MCF 10A (cell line): ENCODE measurements at regions of chr19 and their contacts with region 1.

Region 1: DNA sequence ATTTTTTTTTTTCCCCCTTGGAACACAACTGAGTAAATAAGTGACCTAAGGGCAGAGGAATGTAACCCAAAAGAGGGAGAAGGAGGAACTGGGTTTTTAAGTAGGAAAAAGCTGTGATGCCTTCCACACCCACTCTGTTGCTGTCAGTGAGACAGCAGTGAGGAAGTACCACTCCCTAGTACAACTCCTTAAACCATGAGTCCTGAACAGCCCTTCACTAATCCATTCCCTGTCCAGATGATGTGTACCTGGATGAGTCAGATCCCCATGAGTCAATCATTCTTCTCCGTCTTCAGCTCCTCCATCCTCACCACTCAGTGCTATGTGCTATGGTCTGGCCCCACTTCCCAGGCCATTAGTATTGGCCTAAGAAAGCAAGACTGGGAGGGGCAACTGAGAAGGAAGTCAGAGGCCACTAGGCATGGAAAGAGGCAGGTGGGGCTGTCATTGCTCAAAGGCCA is 12.9 kb upstream of the CXCL17 start:
- DNase-seq: peak; percentile 77
- H3K4me3 Mint-ChIP-seq: no peak overlapping the region
- H3K27ac Mint-ChIP-seq: no peak overlapping the region
- H3K4me1 Mint-ChIP-seq: peaks cover 7% of the 10 kb centered on the region
- H3K27me3 Mint-ChIP-seq: peaks cover 14% of the 10 kb centered on the region
- CTCF ChIP-seq: no peak

Region 2: DNA sequence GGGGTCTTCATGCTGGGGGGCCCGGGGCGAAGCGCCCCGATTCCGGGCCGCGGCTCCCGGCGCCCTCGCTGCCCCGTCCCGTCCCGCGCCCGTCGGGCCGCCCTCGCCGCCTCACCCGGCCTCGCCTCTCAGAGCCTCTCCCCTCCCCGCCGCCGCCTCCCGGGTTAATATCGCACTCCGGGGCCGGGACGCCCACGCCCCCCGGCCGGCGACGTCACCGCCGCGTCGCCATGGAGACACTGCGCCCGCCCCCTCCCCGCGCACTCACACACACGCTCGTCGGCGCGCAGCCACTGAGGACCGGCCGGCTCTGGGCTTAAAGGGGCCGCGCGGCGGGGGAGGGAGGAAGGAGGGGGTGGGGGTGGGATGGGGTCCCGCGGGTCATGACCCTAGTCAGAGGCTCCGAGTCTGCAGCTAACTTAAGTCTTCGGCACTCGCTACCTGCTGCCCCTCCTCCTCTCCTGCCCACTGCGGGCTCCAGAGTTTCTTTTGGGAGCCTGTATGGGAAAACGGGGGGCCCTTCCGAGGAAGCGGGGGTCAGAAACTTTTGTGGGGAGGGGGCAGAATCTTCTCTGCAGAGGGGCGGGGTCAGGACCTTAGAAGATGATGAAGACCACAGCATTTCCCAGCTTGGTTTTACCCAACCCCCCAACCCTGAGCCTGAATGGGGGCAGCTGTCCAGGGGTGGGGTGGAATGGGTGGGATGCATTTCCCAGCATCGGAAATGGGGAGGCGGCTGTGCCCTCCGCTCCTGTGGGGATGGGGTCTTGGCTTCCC is 200.5 kb before region 1 on chr19 and contains the start of gene ERF:
- CTCF ChIA-PET with region 1: no interaction called
- POLR2A ChIA-PET with region 1: no interaction called
- intact Hi-C with region 1: no loop called
- DNase-seq: peak; percentile 94
- H3K4me3 Mint-ChIP-seq: peak within 1 kb of the TSS; percentile 85
- H3K27ac Mint-ChIP-seq: peak within 1 kb of the TSS; percentile 35
- H3K4me1 Mint-ChIP-seq: peaks cover 22% of the 10 kb centered on the region
- H3K27me3 Mint-ChIP-seq: no peaks in the 10 kb centered on the region
- CTCF ChIP-seq: no peak
- total RNA-seq, gene ERF: 27.8 and 35.1 TPM in 2 replicates

Region 3: GRCh38 chr19:42529248-42529764 is 73.7 kb after region 1 on chr19:
- CTCF ChIA-PET with region 1: interaction called, 62 read pairs
- POLR2A ChIA-PET with region 1: no interaction called
- intact Hi-C with region 1: loop called (anchors 1 kb)
- DNase-seq: peak; percentile 70
- H3K4me3 Mint-ChIP-seq: no peak overlapping the region
- H3K27ac Mint-ChIP-seq: no peak overlapping the region
- H3K4me1 Mint-ChIP-seq: peaks cover 13% of the 10 kb centered on the region
- H3K27me3 Mint-ChIP-seq: no peaks in the 10 kb centered on the region
- CTCF ChIP-seq: peak; percentile 80